Breast epithelium (tissue), 4 donors: ENCODE measurements at regions of chr12 and their contacts with region 1.

Region 1: DNA sequence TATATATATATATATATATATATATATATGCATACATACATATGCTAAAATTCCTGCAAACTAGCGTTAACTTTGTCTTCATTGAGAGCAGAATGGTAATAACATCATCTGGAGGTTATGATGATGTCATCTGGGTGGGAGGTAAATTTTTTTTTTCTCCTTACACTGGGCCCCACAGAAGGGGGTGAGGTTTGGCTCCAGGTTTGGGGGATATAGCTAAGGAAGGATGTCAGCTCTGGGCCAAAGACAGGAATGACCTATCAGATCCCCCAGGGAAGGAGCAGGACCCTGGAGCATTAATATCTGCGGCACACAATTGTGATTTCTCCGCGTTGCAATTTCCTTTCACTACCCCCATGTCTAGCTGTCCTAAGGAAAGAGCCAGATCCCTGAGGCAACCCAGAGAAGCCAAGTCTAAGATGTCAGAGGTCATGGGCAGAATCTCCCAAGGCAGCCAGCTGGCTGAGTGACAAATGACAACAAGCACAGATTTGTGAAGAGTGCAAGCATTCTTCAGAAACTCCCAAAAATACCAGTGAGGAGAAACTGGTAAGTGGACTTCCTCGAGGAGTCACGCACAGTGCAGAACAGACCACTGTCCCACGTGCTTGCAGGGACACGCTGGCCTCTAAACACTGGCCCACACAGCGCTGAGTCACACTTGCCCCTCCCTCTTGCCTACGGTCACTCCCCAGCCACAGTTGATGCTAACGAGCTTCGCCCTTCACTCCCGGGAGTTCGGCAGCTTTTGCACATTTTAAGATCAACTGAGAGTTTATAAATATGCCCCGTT is 9.9 kb downstream of the UBC start:
- DNase-seq: peak; percentile 81 to 82
- H3K4me3 ChIP-seq: peak overlapping the region in 1 of 3 donors; percentile 49
- H3K27ac ChIP-seq: peak overlapping the region; percentile 68 to 85
- H3K4me1 ChIP-seq: peaks cover 1 to 8% of the 10 kb centered on the region in 2 donors
- H3K27me3 ChIP-seq: no peaks in the 10 kb centered on the region
- CTCF ChIP-seq: no peak
- POLR2A ChIP-seq: no peak

Region 2: GRCh38 chr12:124777399-124778372 is 126.8 kb before region 1 on chr12:
- intact Hi-C with region 1: loop called (anchors 2 kb)
- DNase-seq: peak; percentile 66 to 84
- H3K4me3 ChIP-seq: peak overlapping the region in 1 of 3 donors; percentile 33
- H3K27ac ChIP-seq: peak overlapping the region; percentile 94 to 96
- H3K4me1 ChIP-seq: peaks cover 5 to 17% of the 10 kb centered on the region in 2 donors
- H3K27me3 ChIP-seq: no peaks in the 10 kb centered on the region
- CTCF ChIP-seq: no peak
- POLR2A ChIP-seq: no peak